BJ (cell line): ENCODE measurements at regions of chr19 and their contacts with region 1.

Region 1: GRCh38 chr19:29263305-29264135 is 50.6 kb upstream of the UQCRFS1 start:
- DNase-seq: no peak
- H3K4me3 ChIP-seq: no peak overlapping the region
- H3K27me3 ChIP-seq: no peaks in the 10 kb centered on the region
- CTCF ChIP-seq: peak; percentile 85

Region 2: DNA sequence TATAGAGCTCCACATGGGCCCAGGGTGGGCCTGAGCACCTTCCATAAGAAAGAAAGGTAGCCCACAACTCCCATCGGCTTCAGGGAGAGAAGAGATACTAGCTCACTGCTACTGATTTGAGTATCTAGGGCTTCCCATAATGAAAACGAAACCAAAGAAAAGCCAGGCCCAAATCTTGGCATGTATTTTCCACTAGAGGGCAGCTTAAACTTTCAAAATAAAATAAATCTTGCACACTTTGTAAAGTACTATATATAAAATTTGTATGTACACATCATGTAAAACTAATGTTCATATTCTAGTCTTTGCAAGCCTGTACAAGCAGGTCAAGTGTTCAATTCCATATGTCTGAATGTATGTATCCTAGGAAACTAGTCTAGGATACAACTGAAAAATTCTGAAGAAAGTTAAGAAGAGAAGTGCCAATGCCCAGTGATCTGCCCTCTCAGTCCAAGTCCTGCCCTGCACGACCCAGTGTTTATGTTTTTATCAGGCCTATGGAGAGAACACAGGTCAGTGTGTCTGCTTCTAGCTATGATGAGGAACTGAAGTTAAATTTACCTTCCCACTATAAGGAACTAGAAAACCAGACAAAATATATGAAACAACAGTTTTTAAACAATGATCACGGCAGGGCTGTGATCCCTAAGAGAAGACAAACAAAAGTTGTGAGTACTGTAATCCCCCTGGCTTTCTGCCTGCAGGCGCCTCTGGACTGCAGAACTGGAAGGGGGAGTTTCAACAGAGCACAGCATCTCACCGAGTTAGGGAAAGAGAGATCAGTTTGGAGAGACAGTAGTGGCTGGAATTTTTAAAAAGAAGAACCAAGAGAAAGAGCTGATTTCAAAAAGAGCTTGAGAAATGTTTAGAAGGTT is 526.3 kb before region 1 on chr19:
- CTCF ChIA-PET with region 1: interaction called, 52 read pairs
- POLR2A ChIA-PET with region 1: no interaction called
- DNase-seq: peak; percentile 6
- H3K4me3 ChIP-seq: no peak overlapping the region
- H3K27me3 ChIP-seq: no peaks in the 10 kb centered on the region
- CTCF ChIP-seq: peak; percentile 68